Activated CD4-positive, alpha-beta T cell treated with anti-CD3 and anti-CD28 coated beads, Interleukin-2, amount 10 ng/mL, durations not matched to agents 7 days and 5 days (primary cell): ENCODE measurements at regions of chr10 and their contacts with region 1.

Region 1: GRCh38 chr10:8272794-8273435 is 218.4 kb downstream of the GATA3 start:
- DNase-seq: no peak
- H3K4me3 Mint-ChIP-seq: no peak overlapping the region
- H3K27ac Mint-ChIP-seq: no peak overlapping the region
- H3K4me1 Mint-ChIP-seq: peaks cover 2% of the 10 kb centered on the region
- H3K27me3 Mint-ChIP-seq: peaks cover 2% of the 10 kb centered on the region

Region 2: DNA sequence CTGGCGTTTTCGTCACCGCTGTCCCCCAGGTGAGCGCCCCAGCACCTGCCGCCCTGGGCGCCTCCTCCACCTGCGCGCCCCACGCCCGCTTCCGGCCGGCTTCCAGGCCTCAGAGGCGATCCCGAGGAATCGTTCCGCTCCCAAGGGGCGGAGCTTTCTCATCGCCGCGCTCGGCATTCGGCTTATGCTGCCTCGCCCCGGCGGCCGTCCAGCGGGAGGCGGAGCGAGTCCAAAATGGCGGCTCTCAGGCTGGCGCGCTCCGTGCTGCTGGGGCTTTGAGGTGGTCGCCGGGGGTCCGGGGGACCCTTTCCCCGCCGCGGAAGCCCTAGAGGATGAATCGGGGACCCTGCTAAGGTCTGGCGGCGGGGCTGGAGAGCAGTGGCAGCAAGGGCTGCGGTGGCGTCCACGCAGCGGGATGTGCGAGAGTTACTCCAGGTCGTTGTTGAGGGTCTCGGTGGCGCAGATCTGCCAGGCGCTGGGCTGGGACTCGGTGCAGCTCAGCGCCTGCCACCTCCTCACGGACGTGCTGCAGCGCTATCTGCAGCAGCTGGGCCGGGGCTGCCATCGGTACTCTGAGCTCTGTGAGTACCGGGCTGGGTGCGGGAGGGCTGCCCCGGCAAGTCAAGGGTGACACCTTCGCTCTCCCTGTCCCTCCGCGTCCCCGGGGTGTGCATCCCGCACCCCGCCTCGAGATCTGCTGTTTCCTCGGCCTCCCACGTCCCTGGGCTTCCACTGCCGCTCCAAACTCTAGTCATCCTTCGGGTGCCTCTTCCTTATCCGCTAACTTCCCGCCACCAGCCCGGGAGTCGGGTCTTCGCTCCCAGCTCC is 454.4 kb before region 1 on chr10 and contains the start of gene TAF3:
- CTCF ChIA-PET with region 1: no interaction called
- POLR2A ChIA-PET with region 1: interaction called, 13 read pairs
- DNase-seq: peak; percentile 93
- H3K4me3 Mint-ChIP-seq: peak within 1 kb of the TSS; percentile 92
- H3K27ac Mint-ChIP-seq: peak within 1 kb of the TSS; percentile 91
- H3K4me1 Mint-ChIP-seq: peaks cover 30% of the 10 kb centered on the region
- H3K27me3 Mint-ChIP-seq: peaks cover 3% of the 10 kb centered on the region
- total RNA-seq, gene TAF3: 13.9 to 16.4 TPM